Mammary epithelial cell (primary cell): ENCODE measurements at regions of chr20 and their contacts with region 1.

Region 1: DNA sequence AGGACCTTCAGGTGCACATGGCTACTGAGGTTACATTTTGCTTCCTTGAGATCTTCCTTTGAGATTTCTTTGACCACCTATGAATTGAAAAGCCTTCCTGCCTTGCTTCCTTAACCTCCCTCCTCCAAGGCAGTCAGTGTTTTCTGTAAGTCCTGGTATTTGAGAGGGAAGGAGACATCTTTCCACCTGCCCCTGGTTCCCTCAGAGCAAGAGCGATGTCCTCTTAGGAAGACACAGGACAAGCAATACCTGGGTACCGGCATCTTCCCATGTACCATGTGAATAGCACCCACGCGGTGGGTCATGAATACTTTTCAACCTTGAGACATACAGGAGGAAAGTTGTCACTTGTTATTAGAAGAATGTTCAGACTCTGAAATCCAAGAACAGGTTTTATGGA is 37.1 kb downstream of the GINS1 start:
- DNase-seq: no peak
- H3K4me3 ChIP-seq: no peak overlapping the region
- H3K27ac ChIP-seq: no peak overlapping the region
- H3K4me1 ChIP-seq: no peaks in the 10 kb centered on the region
- H3K27me3 ChIP-seq: no peaks in the 10 kb centered on the region
- CTCF ChIP-seq: no peak

Region 2: GRCh38 chr20:25356271-25356933 is 88.2 kb before region 1 on chr20:
- CTCF ChIA-PET with region 1: no interaction called
- dilution Hi-C with region 1: no loop called
- in situ Hi-C with region 1: no loop called
- intact Hi-C with region 1: no loop called
- DNase-seq: no peak
- H3K4me3 ChIP-seq: no peak overlapping the region
- H3K27ac ChIP-seq: no peak overlapping the region
- H3K4me1 ChIP-seq: no peaks in the 10 kb centered on the region
- H3K27me3 ChIP-seq: no peaks in the 10 kb centered on the region
- CTCF ChIP-seq: no peak

Region 3: GRCh38 chr20:25508078-25508770 is 63.7 kb after region 1 on chr20:
- CTCF ChIA-PET with region 1: no interaction called
- dilution Hi-C with region 1: no loop called
- in situ Hi-C with region 1: loop called in 1 of 2 experiments (anchors 10 kb)
- intact Hi-C with region 1: no loop called
- DNase-seq: peak; percentile 28
- H3K4me3 ChIP-seq: no peak overlapping the region
- H3K27ac ChIP-seq: no peak overlapping the region
- H3K4me1 ChIP-seq: peaks cover 3% of the 10 kb centered on the region
- H3K27me3 ChIP-seq: no peaks in the 10 kb centered on the region
- CTCF ChIP-seq: no peak

Region 4: DNA sequence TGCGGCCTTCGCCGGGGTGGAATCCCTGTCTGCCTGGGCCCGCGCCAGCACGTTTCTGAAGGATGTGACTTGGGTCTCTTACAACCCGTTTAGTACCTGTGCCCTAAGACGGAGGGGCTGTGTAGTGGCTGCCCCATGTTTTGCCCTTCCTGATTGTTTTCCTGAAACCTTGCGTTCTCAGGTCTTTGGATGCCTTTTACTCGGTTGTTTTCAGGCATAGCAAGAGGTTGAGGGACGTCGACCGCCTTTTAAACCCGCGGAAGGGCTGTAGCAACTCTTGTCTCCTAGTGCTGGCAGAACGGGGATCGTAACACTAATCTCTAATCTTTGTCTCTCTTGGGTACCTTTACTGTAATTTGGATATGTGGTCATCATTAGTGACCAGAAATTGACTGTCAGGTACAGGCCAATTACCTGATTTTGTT is 180.0 kb after region 1 on chr20:
- CTCF ChIA-PET with region 1: no interaction called
- dilution Hi-C with region 1: no loop called
- in situ Hi-C with region 1: no loop called
- intact Hi-C with region 1: no loop called
- DNase-seq: no peak
- H3K4me3 ChIP-seq: peak overlapping the region; percentile 53 to 94 (median 87)
- H3K27ac ChIP-seq: peak overlapping the region; percentile 83
- H3K4me1 ChIP-seq: peaks cover 17% of the 10 kb centered on the region
- H3K27me3 ChIP-seq: no peaks in the 10 kb centered on the region
- CTCF ChIP-seq: no peak